HEK293 (cell line): ENCODE measurements at regions of chrX and their contacts with region 1.

Region 1: DNA sequence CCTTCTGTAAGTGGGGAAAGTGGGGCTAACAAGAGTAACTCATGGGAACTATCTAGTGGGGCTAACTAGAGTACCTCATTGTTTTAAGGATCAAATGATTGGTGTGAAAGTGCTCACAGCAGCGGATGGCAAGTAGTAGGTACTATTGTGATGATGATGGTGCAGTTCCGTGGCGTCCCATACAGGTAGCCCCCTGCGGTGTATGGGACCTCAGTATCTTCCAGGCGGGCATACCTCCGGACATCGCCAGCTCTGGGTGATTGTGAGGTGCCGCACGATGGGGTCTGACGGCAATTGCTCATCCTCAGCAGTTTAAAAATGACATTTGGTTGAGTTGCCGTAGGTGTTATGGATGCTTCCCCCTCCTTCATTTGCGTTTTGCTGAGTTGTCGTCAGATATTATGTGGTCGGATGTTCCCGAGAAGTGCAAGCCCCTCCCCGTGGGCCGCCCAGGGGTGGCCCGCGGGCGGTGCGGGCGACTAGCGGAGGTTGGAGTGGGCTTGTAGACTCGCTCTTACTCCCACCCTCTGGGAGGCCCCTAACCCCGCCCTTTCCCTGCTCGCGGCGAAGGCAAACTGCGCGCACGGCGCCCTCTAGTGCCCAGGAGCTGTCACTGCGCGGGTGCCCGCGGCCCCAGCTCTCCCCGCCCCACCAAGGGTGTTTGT is 18.3 kb upstream of the GPR101 start:
- H3K4me3 ChIP-seq: peak overlapping the region; percentile 28
- H3K27ac ChIP-seq: no peak overlapping the region
- H3K4me1 ChIP-seq: no peaks in the 10 kb centered on the region
- CTCF ChIP-seq: peak; percentile 76

Region 2: GRCh38 chrX:137062915-137063617 is 11.0 kb after region 1 on chrX:
- CTCF ChIA-PET with region 1: interaction called, 13 read pairs
- POLR2A ChIA-PET with region 1: no interaction called
- H3K4me3 ChIP-seq: no peak overlapping the region
- H3K27ac ChIP-seq: no peak overlapping the region
- H3K4me1 ChIP-seq: no peaks in the 10 kb centered on the region
- CTCF ChIP-seq: no peak

Region 3: GRCh38 chrX:137143864-137144263 is 91.8 kb after region 1 on chrX:
- CTCF ChIA-PET with region 1: no interaction called
- POLR2A ChIA-PET with region 1: no interaction called
- H3K4me3 ChIP-seq: no peak overlapping the region
- H3K27ac ChIP-seq: no peak overlapping the region
- H3K4me1 ChIP-seq: no peaks in the 10 kb centered on the region
- CTCF ChIP-seq: no peak